HCT116 (cell line): ENCODE measurements at regions of chr1 and their contacts with region 1.

Region 1: DNA sequence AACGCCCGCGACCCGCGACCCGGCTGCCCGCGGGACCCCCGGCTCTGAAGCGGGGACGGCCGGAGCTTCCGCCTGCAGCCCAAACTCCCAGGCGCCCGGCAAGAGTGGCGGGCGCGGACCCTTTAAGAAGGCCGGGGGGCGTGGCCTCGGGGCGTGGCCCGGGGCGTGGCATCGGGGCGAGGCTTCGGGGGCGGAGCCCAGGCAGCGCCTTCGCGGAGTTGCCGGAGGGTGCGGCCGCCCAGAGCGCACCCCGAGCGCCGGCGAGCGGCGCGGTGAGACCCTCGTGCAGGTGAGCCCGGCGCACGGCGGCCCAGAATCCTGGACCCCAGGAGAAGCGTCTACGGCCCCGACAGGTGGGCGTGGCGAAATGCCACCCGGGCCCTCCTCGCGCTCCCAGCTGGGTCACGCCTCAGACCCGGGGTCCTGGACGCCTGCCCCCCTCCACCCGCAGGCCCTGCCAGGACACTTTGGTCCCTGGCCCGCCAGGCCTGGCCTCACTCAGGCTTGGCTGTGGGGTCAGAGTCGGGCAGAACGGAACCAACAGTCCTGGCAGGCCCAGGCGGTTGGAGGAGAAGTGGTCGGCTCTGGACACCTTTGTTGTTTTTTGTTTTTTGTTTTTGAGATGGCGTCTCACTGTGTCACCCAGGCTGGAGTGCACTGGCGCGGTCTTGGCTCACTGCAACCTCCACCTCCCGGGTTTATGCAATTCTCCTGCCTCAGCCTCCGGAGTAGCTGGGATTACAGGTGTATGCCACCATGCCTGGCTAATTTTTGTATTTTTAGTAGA is 14.4 kb downstream of the RNF223 start:
- DNase-seq: no peak
- ATAC-seq: peak; percentile 69
- H3K4me3 ChIP-seq: peak overlapping the region; percentile 69 to 71
- H3K27ac ChIP-seq: peak overlapping the region; percentile 69; the same call in 1 of the 2 replicates
- H3K4me1 ChIP-seq: peaks cover 33 to 66% of the 10 kb centered on the region in 2 experiments
- H3K27me3 ChIP-seq: no peaks in the 10 kb centered on the region
- CTCF ChIP-seq: no peak; a peak in 1 of 6 replicates
- POLR2A ChIP-seq: peak; percentile 56
- RAD21 ChIP-seq: no peak

Region 2: GRCh38 chr1:983799-984473 is 75.8 kb before region 1 on chr1:
- CTCF ChIA-PET with region 1: interaction called, 18 read pairs
- POLR2A ChIA-PET with region 1: interaction called, 5 read pairs
- RAD21 ChIA-PET with region 1: interaction called, 4 to 5 read pairs
- intact Hi-C with region 1: loop called (anchors 5 kb)
- DNase-seq: no peak
- ATAC-seq: peak; percentile 86
- H3K4me3 ChIP-seq: no peak overlapping the region
- H3K27ac ChIP-seq: no peak overlapping the region
- H3K4me1 ChIP-seq: 0 out of 4 replicates have a peak, but pooled peaks cover 0 to 2% of the 10 kb centered on the region in 2 experiments
- H3K27me3 ChIP-seq: no peaks in the 10 kb centered on the region
- CTCF ChIP-seq: peak; percentile 59 to 74 (median 69); a peak in 5 of 6 replicates
- POLR2A ChIP-seq: no peak
- RAD21 ChIP-seq: peak; percentile 86

Region 3: DNA sequence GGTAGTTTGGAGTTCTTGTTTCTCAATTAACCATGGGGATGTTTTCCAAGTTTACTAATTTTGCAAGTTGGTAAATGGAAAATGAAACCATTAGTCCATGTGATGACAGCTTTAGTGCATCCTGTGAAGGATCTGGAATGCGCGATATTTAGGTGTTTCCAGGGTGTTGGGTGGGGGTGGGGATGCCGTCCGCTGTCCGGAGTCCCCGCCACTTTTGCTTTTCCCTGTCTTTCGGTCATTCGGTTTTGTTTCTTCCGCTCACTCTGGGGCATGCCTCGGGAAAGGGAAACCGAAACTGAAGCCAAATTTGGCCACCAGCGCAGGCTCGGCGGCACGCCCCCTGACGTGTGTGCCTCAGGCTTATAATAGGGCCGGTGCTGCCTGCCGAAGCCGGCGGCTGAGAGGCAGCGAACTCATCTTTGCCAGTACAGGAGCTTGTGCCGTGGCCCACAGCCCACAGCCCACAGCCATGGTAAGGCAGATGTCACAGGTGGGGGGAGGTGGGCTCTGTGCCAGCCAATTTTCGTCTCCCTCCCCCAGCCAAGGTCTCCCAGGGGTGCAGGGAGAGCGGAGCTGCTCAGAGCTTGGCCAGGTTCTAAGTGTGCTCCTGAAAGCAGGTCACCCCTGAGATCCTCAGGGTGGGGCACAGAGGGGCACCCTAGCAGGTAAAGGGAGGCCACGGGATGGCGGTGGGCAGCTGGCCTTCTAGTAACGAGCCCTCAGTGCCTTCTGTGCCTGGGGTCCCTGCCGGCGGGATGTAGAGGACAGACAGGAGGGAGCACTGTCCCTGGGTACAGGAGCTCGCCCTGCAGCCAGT is 46.4 kb before region 1 on chr1 and contains the start of gene ISG15:
- CTCF ChIA-PET with region 1: interaction called, 10 read pairs
- POLR2A ChIA-PET with region 1: interaction called, 4 read pairs
- RAD21 ChIA-PET with region 1: no interaction called
- intact Hi-C with region 1: loop called (anchors 5 kb)
- DNase-seq: peak; percentile 60
- ATAC-seq: peak; percentile 75
- H3K4me3 ChIP-seq: peak within 1 kb of the TSS; percentile 80 to 90
- H3K27ac ChIP-seq: peak within 1 kb of the TSS; percentile 73
- H3K4me1 ChIP-seq: peaks cover 22 to 44% of the 10 kb centered on the region in 2 experiments
- H3K27me3 ChIP-seq: no peaks in the 10 kb centered on the region
- CTCF ChIP-seq: no peak
- POLR2A ChIP-seq: peak; percentile 49
- RAD21 ChIP-seq: no peak
- total RNA-seq, gene ISG15: 140 TPM

Region 4: DNA sequence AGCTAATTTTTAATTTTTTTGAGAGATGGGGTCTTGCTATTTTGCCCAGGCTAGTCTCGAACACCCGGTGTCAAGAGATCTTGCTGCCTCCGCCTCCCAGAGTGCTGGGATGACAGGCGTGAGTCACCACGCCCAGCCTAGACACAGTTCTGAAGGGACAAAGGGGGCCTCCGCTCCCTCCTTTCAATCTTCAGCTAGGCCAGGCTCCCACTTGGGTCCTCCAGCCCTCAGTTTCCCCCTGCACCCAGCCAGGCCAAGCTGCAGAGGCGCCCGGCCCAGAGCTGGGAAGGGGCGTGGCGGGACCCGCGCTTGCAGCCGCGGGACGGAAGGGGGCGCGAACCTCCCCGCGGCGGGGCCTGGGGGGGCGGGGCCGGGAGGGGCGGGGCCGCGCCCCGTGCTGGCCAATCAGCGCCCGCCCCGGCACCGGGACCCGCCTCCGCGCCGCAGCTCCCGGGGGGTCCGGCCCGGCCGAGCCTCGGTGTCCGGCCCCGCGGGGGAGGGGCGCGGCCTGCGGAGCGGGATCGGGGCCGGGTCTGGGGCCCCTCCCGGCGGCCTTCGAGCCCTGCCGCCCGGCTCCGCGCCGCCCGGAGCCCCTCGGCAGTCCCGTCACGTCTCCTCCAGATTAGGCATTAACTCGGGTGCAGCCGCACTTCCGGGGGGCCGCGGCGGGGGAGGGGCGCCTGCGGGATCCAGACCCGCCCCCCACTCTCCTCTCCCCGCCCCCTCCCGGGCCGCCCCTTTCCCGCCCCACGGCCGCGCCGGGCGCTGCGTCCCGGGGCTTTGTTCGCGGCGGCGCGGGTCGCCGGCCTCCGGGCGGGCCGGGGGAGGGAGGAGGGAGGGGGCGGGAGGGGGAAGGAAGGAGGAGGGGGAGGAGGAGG is 40.3 kb before region 1 on chr1:
- CTCF ChIA-PET with region 1: interaction called, 10 read pairs
- POLR2A ChIA-PET with region 1: interaction called, 4 read pairs
- RAD21 ChIA-PET with region 1: no interaction called
- intact Hi-C with region 1: loop called (anchors 5 kb)
- DNase-seq: peak; percentile 61
- ATAC-seq: peak; percentile 74
- H3K4me3 ChIP-seq: peak overlapping the region; percentile 5 to 46; a peak in 2 of 4 replicates
- H3K27ac ChIP-seq: peak overlapping the region; percentile 62
- H3K4me1 ChIP-seq: peaks cover 44 to 67% of the 10 kb centered on the region in 2 experiments
- H3K27me3 ChIP-seq: no peaks in the 10 kb centered on the region
- CTCF ChIP-seq: peak in 2 of 3 experiments; percentile 36 to 40; a peak in 4 of 6 replicates
- POLR2A ChIP-seq: no peak
- RAD21 ChIP-seq: no peak

Region 5: DNA sequence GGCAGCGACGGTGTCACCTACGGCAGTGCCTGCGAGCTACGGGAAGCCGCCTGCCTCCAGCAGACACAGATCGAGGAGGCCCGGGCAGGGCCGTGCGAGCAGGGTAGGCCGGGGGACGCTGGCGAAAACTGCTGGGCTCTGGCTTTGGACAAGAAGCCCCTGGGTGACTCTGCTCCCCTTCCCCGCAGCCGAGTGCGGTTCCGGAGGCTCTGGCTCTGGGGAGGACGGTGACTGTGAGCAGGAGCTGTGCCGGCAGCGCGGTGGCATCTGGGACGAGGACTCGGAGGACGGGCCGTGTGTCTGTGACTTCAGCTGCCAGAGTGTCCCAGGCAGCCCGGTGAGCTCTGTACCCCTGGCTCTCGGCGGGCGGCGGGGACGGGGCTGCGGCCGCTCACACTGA is 15.8 kb before region 1 on chr1:
- CTCF ChIA-PET with region 1: no interaction called
- POLR2A ChIA-PET with region 1: no interaction called
- RAD21 ChIA-PET with region 1: no interaction called
- intact Hi-C with region 1: no loop called
- DNase-seq: no peak
- ATAC-seq: no peak
- H3K4me3 ChIP-seq: no peak overlapping the region
- H3K27ac ChIP-seq: no peak overlapping the region
- H3K4me1 ChIP-seq: peaks cover 7 to 17% of the 10 kb centered on the region in 2 experiments; a peak in 3 of 4 replicates
- H3K27me3 ChIP-seq: no peaks in the 10 kb centered on the region
- CTCF ChIP-seq: no peak
- POLR2A ChIP-seq: no peak
- RAD21 ChIP-seq: no peak